Activated naive CD8-positive, alpha-beta T cell treated with anti-CD3 and anti-CD28 coated beads, Interleukin-2, amount 10 ng/mL, durations not matched to agents 7 days and 5 days (primary cell): ENCODE measurements at regions of chr1 and their contacts with region 1.

Region 1: DNA sequence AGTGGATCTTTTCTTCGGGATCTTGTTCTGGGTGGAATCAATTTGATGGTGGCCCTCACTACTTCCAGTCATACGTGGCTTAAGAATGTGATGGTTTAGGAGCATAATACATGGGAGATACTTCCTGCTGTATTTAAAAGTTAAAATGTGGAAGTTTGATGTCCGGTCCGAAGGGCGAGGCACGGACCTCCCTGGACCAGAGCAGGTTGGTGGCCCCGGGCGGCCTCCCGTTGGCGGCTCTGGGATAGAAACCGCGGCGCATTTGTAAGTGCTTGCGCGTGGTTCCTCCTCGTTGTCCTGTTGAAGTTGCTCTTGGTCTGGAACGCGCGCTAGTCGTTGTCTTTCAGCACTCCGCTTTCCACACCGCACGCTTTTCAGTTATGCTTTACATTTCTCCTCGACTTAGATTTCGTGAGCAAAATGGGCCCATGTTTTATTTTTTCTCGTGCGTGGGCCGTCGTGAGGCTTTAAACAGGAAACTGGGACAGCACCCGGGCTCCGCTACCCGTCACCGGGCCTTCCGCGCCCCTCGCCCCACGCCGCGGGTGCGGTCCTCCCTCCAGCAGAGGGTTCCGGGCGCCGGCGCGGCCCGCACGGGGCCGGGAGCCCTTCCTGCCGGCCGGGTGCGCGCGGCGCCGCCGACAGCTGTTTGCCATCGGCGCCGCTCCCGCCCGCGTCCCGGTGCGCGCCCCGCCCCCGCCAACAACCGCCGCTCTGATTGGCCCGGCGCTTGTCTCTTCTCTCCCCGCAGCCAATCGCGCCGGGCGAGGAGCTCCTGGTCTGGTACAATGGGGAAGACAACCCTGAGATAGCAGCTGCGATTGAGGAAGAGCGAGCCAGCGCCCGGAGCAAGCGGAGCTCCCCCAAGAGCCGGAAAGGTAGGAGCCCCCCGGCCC is 48.9 kb downstream of the PRDM2 start:
- DNase-seq: peak; percentile 97
- ATAC-seq: peak; percentile 94
- H3K4me3 Mint-ChIP-seq: peak overlapping the region; percentile 90
- H3K27ac Mint-ChIP-seq: peak overlapping the region; percentile 86
- H3K4me1 Mint-ChIP-seq: peaks cover 34% of the 10 kb centered on the region
- H3K27me3 Mint-ChIP-seq: no peaks in the 10 kb centered on the region

Region 2: GRCh38 chr1:13642306-13643004 is 106.4 kb before region 1 on chr1:
- POLR2A ChIA-PET with region 1: no interaction called
- DNase-seq: no peak
- ATAC-seq: no peak
- H3K4me3 Mint-ChIP-seq: no peak overlapping the region
- H3K27ac Mint-ChIP-seq: no peak overlapping the region
- H3K4me1 Mint-ChIP-seq: peaks cover 2% of the 10 kb centered on the region
- H3K27me3 Mint-ChIP-seq: peaks cover 3% of the 10 kb centered on the region

Region 3: DNA sequence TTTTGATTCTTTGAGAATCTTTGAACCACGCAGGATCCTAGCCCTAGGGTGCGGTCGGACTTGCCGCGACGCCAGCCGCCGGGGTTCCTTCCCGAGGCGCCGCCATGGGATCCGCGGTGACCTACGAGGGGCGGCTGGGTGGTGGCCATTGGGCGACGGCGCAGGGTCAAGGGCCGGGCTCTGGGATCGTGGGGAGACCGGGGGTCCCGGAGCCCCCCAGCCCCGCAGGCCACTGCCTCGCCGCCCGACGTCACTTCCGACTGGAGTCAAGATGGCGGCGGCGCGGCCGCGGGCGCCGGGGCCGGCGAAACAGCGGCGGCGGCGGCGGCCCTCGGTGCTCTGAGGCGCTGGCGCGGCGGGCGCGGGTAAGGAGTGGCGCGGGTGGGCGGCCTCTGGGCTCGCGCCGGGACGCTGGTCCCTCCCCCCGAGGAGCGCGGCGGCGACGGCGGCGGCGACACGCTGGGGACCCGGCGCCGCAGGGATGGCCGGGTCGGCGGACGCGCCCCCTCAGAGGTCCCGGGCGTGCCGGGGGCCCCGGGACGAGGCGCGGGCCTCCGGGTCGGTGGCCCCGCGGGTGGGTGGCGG is 48.8 kb before region 1 on chr1 and contains the start of gene PRDM2:
- POLR2A ChIA-PET with region 1: interaction called, 19 read pairs
- DNase-seq: peak; percentile 83
- ATAC-seq: peak; percentile 55
- H3K4me3 Mint-ChIP-seq: peak within 1 kb of the TSS; percentile 97
- H3K27ac Mint-ChIP-seq: peak within 1 kb of the TSS; percentile 98
- H3K4me1 Mint-ChIP-seq: peaks cover 29% of the 10 kb centered on the region
- H3K27me3 Mint-ChIP-seq: no peaks in the 10 kb centered on the region
- total RNA-seq, gene PRDM2: 75.2 to 79.8 TPM

Region 4: GRCh38 chr1:13725714-13726175 is 23.1 kb before region 1 on chr1:
- POLR2A ChIA-PET with region 1: interaction called, 88 read pairs
- DNase-seq: no peak
- ATAC-seq: peak; percentile 49
- H3K4me3 Mint-ChIP-seq: no peak overlapping the region
- H3K27ac Mint-ChIP-seq: peak overlapping the region; percentile 52
- H3K4me1 Mint-ChIP-seq: peaks cover 40% of the 10 kb centered on the region
- H3K27me3 Mint-ChIP-seq: no peaks in the 10 kb centered on the region

Region 5: GRCh38 chr1:13730751-13731482 is 17.9 kb before region 1 on chr1:
- POLR2A ChIA-PET with region 1: interaction called, 88 read pairs
- DNase-seq: peak; percentile 76
- ATAC-seq: peak; percentile 91
- H3K4me3 Mint-ChIP-seq: peak overlapping the region; percentile 90
- H3K27ac Mint-ChIP-seq: peak overlapping the region; percentile 100
- H3K4me1 Mint-ChIP-seq: peaks cover 59% of the 10 kb centered on the region
- H3K27me3 Mint-ChIP-seq: no peaks in the 10 kb centered on the region